Activated B cell treated with CpG ODN at 0.5 μM for 24 hours (primary cell): ENCODE measurements at regions of chr3 and their contacts with region 1.

Region 1: GRCh38 chr3:158644345-158644908 is at the start of gene GFM1:
- DNase-seq: peak; percentile 75
- ATAC-seq: peak; percentile 96
- H3K4me3 Mint-ChIP-seq: peak within 1 kb of the TSS; percentile 99
- H3K27ac Mint-ChIP-seq: peak within 1 kb of the TSS; percentile 90
- H3K4me1 Mint-ChIP-seq: peaks cover 24% of the 10 kb centered on the region
- H3K27me3 Mint-ChIP-seq: no peaks in the 10 kb centered on the region
- CTCF ChIP-seq: peak; percentile 46
- total RNA-seq, gene GFM1: 46.8 and 56.4 TPM in 2 replicates

Region 2: GRCh38 chr3:157618075-157618760 is 1026.2 kb before region 1 on chr3:
- CTCF ChIA-PET with region 1: no interaction called
- POLR2A ChIA-PET with region 1: no interaction called
- intact Hi-C with region 1: loop called (anchors 2 kb)
- DNase-seq: no peak
- ATAC-seq: peak; percentile 93
- H3K4me3 Mint-ChIP-seq: no peak overlapping the region
- H3K27ac Mint-ChIP-seq: no peak overlapping the region
- H3K4me1 Mint-ChIP-seq: no peaks in the 10 kb centered on the region
- H3K27me3 Mint-ChIP-seq: peaks cover 16% of the 10 kb centered on the region
- CTCF ChIP-seq: no peak

Region 3: DNA sequence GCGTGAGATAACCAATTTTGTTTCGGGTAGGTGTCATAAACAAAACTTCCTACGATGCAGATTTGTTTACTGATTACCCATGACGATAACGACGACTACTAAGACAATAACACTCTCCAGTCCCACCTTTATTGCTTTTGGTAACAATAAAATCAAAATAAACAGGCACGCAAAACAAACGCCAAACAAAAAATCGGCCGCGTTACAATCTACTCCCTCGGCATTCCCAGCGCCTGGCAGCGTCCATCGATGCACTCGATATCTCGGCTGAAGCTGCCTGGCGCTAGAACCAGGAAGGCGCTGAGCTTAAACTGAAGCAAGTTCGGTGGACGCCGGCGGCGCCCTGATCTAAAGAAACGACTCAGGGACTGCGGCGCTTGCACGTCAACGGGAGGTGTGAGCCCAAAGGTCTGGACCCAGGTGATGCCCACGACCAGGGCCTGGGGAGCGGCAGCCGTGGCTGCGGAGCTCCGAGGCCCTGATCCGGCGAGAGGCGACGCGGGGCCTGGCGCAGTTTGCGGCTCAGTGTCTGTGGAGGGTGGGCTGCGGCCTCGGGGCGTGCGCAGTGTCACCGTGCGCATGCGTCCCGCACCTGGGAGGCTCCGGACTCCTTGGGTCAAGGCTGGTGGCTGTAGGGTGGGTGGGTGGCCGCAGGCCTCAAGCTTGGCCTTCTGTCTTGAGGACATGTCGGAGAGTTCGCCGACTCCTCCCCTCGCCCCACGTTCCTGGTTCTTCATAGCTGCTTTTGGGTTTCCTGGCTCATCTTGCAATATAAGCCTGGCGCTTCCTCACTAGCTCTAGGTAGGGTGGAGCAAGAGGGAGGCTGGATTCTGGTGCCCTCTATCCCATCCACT is 534.4 kb before region 1 on chr3 and contains the start of gene RSRC1:
- CTCF ChIA-PET with region 1: no interaction called
- POLR2A ChIA-PET with region 1: interaction called, 3 read pairs
- intact Hi-C with region 1: loop called (anchors 2 kb)
- DNase-seq: peak; percentile 72
- ATAC-seq: peak; percentile 89
- H3K4me3 Mint-ChIP-seq: peak within 1 kb of the TSS; percentile 90
- H3K27ac Mint-ChIP-seq: peak within 1 kb of the TSS; percentile 83
- H3K4me1 Mint-ChIP-seq: peaks cover 48% of the 10 kb centered on the region
- H3K27me3 Mint-ChIP-seq: peaks cover 31% of the 10 kb centered on the region
- CTCF ChIP-seq: no peak
- total RNA-seq, gene RSRC1: 39.9 and 44.8 TPM in 2 replicates

Region 4: GRCh38 chr3:158659454-158660237 is 15.2 kb after region 1 on chr3:
- CTCF ChIA-PET with region 1: interaction called, 23 read pairs
- POLR2A ChIA-PET with region 1: interaction called, 12 read pairs
- intact Hi-C with region 1: loop called (anchors 2 kb)
- DNase-seq: no peak
- ATAC-seq: peak; percentile 62
- H3K4me3 Mint-ChIP-seq: no peak overlapping the region
- H3K27ac Mint-ChIP-seq: no peak overlapping the region
- H3K4me1 Mint-ChIP-seq: no peaks in the 10 kb centered on the region
- H3K27me3 Mint-ChIP-seq: no peaks in the 10 kb centered on the region
- CTCF ChIP-seq: peak; percentile 17

Region 5: DNA sequence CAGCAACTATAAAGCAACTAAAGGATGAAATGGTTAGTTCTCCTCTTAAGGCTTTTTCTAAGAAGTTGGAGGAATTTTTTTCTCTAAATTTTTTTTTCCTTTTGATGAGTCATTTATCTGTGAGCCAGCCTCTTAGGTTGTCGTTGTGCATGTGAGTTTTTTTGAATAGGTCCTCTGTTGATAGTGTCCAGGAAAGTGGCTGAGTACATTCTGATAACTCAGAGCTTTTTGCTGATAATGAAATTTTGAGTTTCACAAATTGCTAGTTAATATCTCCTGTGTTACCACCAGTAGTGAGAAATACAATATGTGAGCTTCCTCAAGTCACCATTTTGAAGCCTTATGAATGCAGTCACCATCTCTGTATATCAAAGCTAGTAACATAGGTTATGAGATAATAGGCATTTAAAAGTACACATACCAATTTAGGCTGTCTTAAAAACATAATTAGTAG is 35.1 kb after region 1 on chr3:
- CTCF ChIA-PET with region 1: no interaction called
- POLR2A ChIA-PET with region 1: no interaction called
- intact Hi-C with region 1: no loop called
- DNase-seq: no peak
- ATAC-seq: no peak
- H3K4me3 Mint-ChIP-seq: no peak overlapping the region
- H3K27ac Mint-ChIP-seq: no peak overlapping the region
- H3K4me1 Mint-ChIP-seq: no peaks in the 10 kb centered on the region
- H3K27me3 Mint-ChIP-seq: no peaks in the 10 kb centered on the region
- CTCF ChIP-seq: no peak

Region 6: GRCh38 chr3:158727206-158728060 is 83.0 kb after region 1 on chr3:
- CTCF ChIA-PET with region 1: no interaction called
- POLR2A ChIA-PET with region 1: interaction called, 5 read pairs
- intact Hi-C with region 1: loop called (anchors 5 kb)
- DNase-seq: no peak
- ATAC-seq: peak; percentile 62
- H3K4me3 Mint-ChIP-seq: no peak overlapping the region
- H3K27ac Mint-ChIP-seq: no peak overlapping the region
- H3K4me1 Mint-ChIP-seq: peaks cover 28% of the 10 kb centered on the region
- H3K27me3 Mint-ChIP-seq: no peaks in the 10 kb centered on the region
- CTCF ChIP-seq: peak; percentile 17

Region 7: GRCh38 chr3:159884661-159885402 is 1240.4 kb after region 1 on chr3:
- CTCF ChIA-PET with region 1: no interaction called
- POLR2A ChIA-PET with region 1: no interaction called
- intact Hi-C with region 1: no loop called
- DNase-seq: no peak
- ATAC-seq: peak; percentile 57
- H3K4me3 Mint-ChIP-seq: no peak overlapping the region
- H3K27ac Mint-ChIP-seq: no peak overlapping the region
- H3K4me1 Mint-ChIP-seq: no peaks in the 10 kb centered on the region
- H3K27me3 Mint-ChIP-seq: no peaks in the 10 kb centered on the region
- CTCF ChIP-seq: no peak